MCF 10A (cell line): ENCODE measurements at regions of chr4 and their contacts with region 1.

Region 1: DNA sequence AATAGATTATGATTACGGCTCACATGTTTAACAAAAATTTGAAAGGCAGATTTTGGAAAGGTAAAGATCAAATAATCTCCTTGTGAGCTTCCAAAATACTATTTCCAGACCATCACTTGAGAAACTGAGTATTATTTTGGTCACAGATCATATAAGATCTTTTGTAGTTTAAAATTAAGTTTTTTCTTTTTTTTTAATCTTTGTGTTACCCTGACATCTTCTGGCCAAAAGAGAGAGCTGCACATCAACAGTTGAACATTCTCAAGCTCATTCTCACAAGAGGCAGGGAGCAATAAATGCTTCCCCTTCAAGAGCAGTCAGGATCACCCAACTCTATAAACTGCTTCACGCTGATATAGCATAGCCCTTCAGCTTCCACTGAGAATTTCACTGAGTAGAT is 15.9 kb downstream of the TMEM192 start:
- DNase-seq: peak; percentile 17
- H3K4me3 Mint-ChIP-seq: no peak overlapping the region
- H3K27ac Mint-ChIP-seq: no peak overlapping the region
- H3K4me1 Mint-ChIP-seq: no peaks in the 10 kb centered on the region
- H3K27me3 Mint-ChIP-seq: no peaks in the 10 kb centered on the region
- CTCF ChIP-seq: peak; percentile 39

Region 2: GRCh38 chr4:164304101-164304639 is 792.6 kb before region 1 on chr4:
- CTCF ChIA-PET with region 1: no interaction called
- POLR2A ChIA-PET with region 1: no interaction called
- intact Hi-C with region 1: no loop called
- DNase-seq: peak; percentile 2
- H3K4me3 Mint-ChIP-seq: no peak overlapping the region
- H3K27ac Mint-ChIP-seq: no peak overlapping the region
- H3K4me1 Mint-ChIP-seq: peaks cover 15% of the 10 kb centered on the region
- H3K27me3 Mint-ChIP-seq: no peaks in the 10 kb centered on the region
- CTCF ChIP-seq: no peak

Region 3: DNA sequence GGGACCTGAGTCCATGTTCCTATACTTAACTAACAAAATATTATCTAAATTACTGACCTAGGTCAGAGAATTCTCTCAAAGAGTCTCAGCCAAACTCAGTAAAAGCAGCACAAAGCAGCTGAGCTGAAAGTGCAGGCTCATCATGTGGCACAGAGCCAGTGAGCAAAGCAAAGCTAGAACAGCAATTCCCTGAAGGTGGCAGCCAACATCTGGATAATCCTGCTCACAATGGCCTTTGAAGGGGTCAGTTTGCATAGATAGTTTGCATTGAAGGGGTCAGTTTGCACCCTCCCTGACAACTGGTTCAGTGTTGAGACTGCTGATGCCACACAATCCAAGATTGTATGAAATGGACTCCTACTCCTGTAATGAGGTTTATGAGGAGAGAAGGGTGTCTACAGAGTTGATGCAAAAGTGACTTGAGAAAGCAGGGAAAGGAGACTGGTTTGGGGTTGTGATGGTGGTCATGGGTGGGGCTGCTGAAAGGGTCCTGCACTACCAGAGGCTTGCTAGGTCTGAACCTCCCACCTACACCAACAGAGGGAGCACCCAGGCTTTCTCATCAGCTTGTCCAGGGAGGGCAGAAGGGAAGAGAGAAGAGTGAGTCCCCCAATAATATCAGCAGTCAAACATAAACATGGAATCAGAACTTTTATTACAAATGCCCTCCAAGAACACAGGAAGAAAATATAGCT is 159.1 kb before region 1 on chr4:
- CTCF ChIA-PET with region 1: interaction called, 10 read pairs
- POLR2A ChIA-PET with region 1: no interaction called
- intact Hi-C with region 1: no loop called
- DNase-seq: peak; percentile 54
- H3K4me3 Mint-ChIP-seq: no peak overlapping the region
- H3K27ac Mint-ChIP-seq: no peak overlapping the region
- H3K4me1 Mint-ChIP-seq: no peaks in the 10 kb centered on the region
- H3K27me3 Mint-ChIP-seq: no peaks in the 10 kb centered on the region
- CTCF ChIP-seq: peak; percentile 18

Region 4: DNA sequence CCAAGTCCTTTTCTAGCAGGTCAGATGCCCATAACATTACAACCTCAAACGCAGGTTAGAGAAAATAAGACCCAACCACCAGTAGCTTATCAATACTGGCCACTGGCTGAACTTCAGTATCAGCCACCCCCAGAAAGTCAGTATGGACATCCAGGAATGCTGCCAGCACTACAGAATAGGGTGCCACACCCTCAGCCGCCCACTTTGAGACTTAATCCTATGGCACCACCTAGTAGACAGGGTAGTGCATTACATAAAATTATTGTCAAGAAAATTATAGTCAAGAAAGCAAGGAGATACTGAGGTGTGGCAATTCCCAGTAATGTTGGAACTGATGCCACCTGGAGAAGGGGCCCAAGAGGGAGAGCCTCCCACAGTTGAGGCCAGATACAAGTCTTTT is 99.5 kb before region 1 on chr4:
- CTCF ChIA-PET with region 1: interaction called, 4 read pairs
- POLR2A ChIA-PET with region 1: no interaction called
- intact Hi-C with region 1: loop called (anchors 2 kb)
- DNase-seq: peak; percentile 70
- H3K4me3 Mint-ChIP-seq: no peak overlapping the region
- H3K27ac Mint-ChIP-seq: no peak overlapping the region
- H3K4me1 Mint-ChIP-seq: no peaks in the 10 kb centered on the region
- H3K27me3 Mint-ChIP-seq: no peaks in the 10 kb centered on the region
- CTCF ChIP-seq: peak; percentile 44

Region 5: DNA sequence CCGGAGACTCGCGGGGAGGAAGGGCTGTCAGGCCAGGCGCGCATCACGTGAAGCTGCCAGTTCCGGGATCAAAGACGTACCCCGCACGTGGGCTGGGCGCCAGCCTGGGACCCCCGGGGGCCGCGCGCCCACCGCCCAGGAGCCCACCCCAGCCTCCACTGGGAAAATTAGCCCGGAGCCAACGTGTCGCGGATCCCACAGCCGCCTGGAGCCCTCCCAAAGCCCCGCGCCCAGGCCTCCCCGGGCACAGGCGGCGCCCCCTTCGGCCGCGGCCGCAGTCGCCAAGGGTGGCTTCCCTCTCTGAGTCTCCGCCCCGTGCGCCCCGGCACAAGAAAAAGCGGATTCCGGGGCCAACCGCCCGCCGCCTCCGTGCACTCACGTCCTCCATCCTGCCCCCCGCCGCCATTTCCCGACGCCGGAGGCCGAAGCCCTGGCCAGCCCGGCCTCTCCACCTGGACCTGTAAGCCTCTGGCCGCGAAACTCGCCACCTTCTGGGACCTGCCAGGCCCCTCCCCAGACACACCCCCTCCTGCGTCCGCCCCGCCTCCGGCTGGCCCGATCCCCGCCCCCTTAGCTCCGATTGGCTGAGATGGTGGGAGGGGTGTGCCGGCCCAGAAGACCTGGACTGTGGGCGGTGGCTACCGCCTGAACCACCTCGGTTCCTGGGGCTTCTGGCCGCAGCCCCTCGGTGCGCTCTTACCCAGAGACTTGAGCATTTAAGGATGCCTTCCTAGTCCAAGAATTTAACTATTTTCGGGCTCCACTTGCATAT is 15.8 kb after region 1 on chr4 and contains the start of gene TMEM192:
- CTCF ChIA-PET with region 1: interaction called, 10 read pairs
- POLR2A ChIA-PET with region 1: interaction called, 3 read pairs
- intact Hi-C with region 1: no loop called
- DNase-seq: peak; percentile 95
- H3K4me3 Mint-ChIP-seq: peak within 1 kb of the TSS; percentile 97
- H3K27ac Mint-ChIP-seq: peak within 1 kb of the TSS; percentile 94
- H3K4me1 Mint-ChIP-seq: peaks cover 9% of the 10 kb centered on the region
- H3K27me3 Mint-ChIP-seq: no peaks in the 10 kb centered on the region
- CTCF ChIP-seq: no peak
- total RNA-seq, gene TMEM192: 26.6 and 31.6 TPM in 2 replicates

Region 6: DNA sequence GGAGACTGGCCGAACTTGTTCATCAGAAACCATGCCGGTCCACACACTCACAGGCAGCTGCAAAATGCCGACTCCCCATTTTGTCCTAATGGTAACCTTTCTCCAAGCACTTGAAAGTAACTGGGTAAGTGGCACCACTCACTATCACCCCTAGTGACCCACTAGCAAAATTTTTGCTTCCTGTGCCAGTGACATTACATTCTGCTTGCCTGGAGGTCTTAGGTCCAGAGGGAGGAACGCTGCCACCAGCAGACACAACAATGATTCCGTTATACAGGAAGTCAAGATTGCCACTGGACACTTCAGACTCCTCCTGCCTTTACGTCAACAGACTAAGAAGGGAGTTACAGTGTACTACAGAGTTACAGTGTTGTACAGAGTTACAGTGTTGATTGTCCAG is 27.7 kb after region 1 on chr4:
- CTCF ChIA-PET with region 1: no interaction called
- POLR2A ChIA-PET with region 1: no interaction called
- intact Hi-C with region 1: no loop called
- DNase-seq: no peak
- H3K4me3 Mint-ChIP-seq: no peak overlapping the region
- H3K27ac Mint-ChIP-seq: no peak overlapping the region
- H3K4me1 Mint-ChIP-seq: no peaks in the 10 kb centered on the region
- H3K27me3 Mint-ChIP-seq: no peaks in the 10 kb centered on the region
- CTCF ChIP-seq: no peak

Region 7: DNA sequence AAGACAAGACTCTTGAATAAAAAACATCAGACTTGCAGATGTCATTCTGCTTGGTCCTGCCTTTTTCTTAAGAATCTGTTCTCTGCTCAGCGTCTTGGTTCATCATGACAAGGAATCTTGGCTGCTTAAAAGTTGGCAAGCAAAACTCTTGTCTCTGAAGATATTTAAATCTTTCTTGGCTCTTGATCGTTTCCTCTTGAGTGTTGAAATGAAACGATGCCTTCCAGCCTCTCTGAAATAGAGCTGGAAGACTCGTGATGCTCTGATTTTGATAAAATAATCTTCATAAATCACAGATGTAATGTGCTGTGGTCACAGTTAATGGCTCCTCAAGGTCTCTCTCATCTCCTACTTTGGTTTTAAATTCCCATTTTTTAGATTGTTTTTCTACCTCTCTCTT is 55.8 kb after region 1 on chr4:
- CTCF ChIA-PET with region 1: no interaction called
- POLR2A ChIA-PET with region 1: no interaction called
- intact Hi-C with region 1: no loop called
- DNase-seq: no peak
- H3K4me3 Mint-ChIP-seq: no peak overlapping the region
- H3K27ac Mint-ChIP-seq: no peak overlapping the region
- H3K4me1 Mint-ChIP-seq: peaks cover 6% of the 10 kb centered on the region
- H3K27me3 Mint-ChIP-seq: no peaks in the 10 kb centered on the region
- CTCF ChIP-seq: no peak